Heart right ventricle (tissue), 16 donors: ENCODE measurements at regions of chr7 and their contacts with region 1.

Region 1: DNA sequence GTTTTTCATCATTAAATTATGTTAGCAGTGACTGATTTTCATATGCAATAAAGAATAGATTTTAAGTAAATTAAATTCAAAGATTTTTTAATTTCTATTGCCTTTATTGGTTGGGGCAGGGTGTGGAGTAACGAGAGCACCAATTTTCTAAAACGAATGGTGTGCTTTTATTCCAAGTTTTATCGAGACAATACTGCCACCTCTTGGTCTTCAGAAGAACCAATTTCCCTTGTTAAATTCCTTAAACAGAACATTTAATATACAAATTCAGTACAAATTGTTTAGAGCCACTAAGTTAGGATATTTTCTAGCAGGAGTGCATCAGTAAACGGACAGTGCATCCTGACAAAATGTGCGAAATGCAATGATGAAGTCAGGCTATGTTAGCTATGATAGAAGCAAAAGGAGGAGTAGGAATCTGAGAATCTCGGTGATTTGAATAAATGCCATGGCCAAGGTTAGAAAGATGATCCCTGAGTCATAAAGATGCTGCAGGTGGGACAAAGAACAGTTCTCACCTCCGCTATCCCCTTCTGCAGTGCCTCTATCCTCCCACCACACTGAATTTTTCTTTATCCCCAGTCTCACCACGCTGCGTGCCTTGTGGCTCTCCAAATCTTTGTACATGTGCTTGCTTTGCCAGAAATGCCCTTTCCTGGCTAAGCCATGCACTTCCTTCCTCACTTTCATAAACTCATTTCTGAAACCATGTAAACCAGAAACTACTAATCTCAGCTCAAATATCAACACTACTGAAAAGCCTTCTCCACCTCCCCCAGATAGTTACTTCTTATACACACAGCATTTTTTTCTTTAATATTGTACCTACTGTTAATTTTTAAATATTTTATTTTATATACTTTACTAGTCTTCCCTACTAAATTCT is 31.9 kb upstream of the AGBL3 start:
- DNase-seq: no peak
- ATAC-seq: peak in 4 of 8 donors; percentile 23 to 55 (median 36)
- H3K4me3 ChIP-seq: no peak overlapping the region
- H3K27ac ChIP-seq: peak overlapping the region in 1 of 10 donors; percentile 16
- H3K4me1 ChIP-seq: no peaks in the 10 kb centered on the region
- H3K27me3 ChIP-seq: no peaks in the 10 kb centered on the region
- CTCF ChIP-seq: peak; percentile 25 to 72 (median 59)

Region 2: DNA sequence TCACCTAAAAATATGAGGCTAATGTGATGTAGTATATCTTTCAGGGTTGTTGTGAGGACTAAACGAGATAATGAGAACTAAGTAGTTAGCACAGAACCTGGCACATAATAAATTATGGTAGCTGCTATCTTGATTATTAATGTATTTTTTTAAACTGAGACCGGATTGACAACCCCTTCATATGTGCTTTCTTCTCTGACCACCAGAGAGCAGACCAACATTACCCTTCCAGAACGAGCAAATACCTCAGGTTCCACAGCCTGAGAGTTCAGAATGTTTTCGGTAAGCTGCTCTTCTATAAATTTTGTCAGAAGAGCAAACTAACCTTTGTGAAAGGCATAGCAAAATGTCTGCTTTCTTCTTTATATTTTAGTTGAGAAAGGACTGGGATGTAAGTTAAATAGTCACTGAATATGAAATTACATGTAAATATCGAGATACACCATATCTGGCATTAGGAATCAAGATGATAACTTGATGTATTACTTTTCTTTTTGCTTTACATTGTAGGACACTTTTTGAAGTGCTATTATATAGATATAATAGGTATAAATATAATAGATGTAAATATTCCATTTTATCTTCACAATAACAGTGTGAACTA is 321.4 kb before region 1 on chr7:
- intact Hi-C with region 1: loop called in 1 of 10 experiments (anchors 5 kb)
- DNase-seq: no peak
- ATAC-seq: peak in 1 of 8 donors; percentile 48
- H3K4me3 ChIP-seq: no peak overlapping the region
- H3K27ac ChIP-seq: no peak overlapping the region
- H3K4me1 ChIP-seq: peaks cover 0 to 16% (median 5%) of the 10 kb centered on the region in 9 donors
- H3K27me3 ChIP-seq: peaks cover 0 to 6% (median 0%) of the 10 kb centered on the region in 7 donors
- CTCF ChIP-seq: peak in 8 of 9 donors; percentile 15 to 65 (median 54)

Region 3: GRCh38 chr7:135224027-135224426 is 269.6 kb after region 1 on chr7:
- intact Hi-C with region 1: no loop called
- DNase-seq: no peak
- ATAC-seq: no peak
- H3K4me3 ChIP-seq: no peak overlapping the region
- H3K27ac ChIP-seq: no peak overlapping the region
- H3K4me1 ChIP-seq: peaks cover 0 to 10% (median 0%) of the 10 kb centered on the region in 9 donors
- H3K27me3 ChIP-seq: peaks cover 0 to 12% (median 0%) of the 10 kb centered on the region in 7 donors
- CTCF ChIP-seq: no peak